A549 (cell line): ENCODE measurements at regions of chr1 and their contacts with region 1.

Region 1: GRCh38 chr1:204806943-204807687 is 63.5 kb upstream of the NFASC start:
- DNase-seq: peak; percentile 82 to 98
- ATAC-seq: peak; percentile 92 to 97
- H3K4me3 ChIP-seq: peak overlapping the region; percentile 44
- H3K27ac ChIP-seq: peak overlapping the region; percentile 65 to 83
- H3K4me1 ChIP-seq: no peaks in the 10 kb centered on the region
- CTCF ChIP-seq: peak; percentile 100
- EP300 ChIP-seq: no peak
- POLR2A ChIP-seq: no peak
- RAD21 ChIP-seq: peak; percentile 89 to 99

Region 2: DNA sequence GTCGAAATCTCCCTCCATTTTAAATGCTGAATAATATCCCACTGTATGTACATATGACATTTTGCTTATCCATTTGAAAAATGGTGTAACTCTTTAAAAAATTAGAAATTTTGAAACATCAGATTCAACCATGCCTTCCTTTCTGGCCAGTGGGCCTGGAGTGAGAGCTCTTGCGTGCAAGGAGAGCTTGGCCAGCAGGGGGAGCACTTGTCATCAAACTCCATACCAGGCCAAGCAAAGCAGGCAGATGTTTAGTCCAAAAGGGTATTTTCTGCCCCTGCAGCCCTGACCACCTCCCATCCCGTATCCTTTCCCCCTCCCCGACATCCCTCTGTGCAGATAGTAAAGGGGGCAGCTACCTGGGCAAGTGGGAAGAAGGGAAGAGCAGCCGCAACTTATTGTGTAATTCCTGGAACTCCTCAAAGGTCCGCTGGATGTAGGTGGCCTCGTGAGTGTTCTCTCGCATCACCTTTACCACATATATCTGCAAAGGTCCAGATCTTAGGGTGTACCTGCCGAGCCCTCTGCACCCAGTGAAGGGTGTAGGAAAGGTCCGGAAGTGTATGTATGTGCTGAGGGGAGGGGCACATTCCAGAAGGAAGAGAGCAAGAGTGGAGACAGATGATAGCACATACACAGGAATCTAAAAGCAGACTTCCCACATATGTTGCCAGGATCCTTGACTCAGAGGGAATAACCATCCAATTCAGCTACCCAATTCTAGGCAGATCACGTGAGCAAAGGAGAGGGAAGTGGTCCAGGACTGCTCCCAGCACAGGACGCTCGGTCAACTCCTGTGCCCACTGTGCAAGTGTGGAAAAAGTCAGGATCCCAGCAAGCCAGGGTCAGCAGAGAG is 375.6 kb before region 1 on chr1:
- CTCF ChIA-PET with region 1: interaction called, 15 read pairs
- POLR2A ChIA-PET with region 1: no interaction called
- DNase-seq: peak; percentile 79
- ATAC-seq: peak; percentile 82 to 95
- H3K4me3 ChIP-seq: no peak overlapping the region
- H3K27ac ChIP-seq: peak overlapping the region; percentile 28 to 51; a peak in 4 of 6 replicates
- H3K4me1 ChIP-seq: peaks cover 22% of the 10 kb centered on the region
- CTCF ChIP-seq: peak; percentile 92
- EP300 ChIP-seq: no peak
- POLR2A ChIP-seq: 0 out of 2 replicates have a peak, but pooled peaks have one; percentile 10
- RAD21 ChIP-seq: peak; percentile 72

Region 3: DNA sequence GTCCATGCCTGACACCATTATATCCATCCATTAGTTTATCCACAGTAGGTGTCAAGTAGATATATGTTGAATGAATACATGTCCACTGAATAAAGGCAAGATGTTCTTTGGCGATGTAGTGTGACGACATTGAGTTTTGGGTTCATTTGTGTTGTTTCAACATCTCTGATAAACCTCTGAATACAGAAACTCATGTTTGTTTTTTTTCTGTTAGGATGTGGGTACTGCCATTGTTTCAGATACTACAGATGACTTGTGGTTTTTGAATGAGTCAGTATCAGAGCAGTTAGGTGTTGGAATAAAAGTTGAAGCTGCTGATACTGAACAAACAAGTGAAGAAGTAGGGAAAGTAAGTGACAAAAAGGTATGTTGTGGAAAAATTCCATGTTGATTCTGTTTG is 262.8 kb before region 1 on chr1:
- CTCF ChIA-PET with region 1: interaction called, 23 read pairs
- POLR2A ChIA-PET with region 1: no interaction called
- DNase-seq: no peak
- ATAC-seq: no peak
- H3K4me3 ChIP-seq: no peak overlapping the region
- H3K27ac ChIP-seq: no peak overlapping the region
- H3K4me1 ChIP-seq: no peaks in the 10 kb centered on the region
- CTCF ChIP-seq: no peak
- EP300 ChIP-seq: no peak
- POLR2A ChIP-seq: no peak
- RAD21 ChIP-seq: no peak

Region 4: GRCh38 chr1:204615881-204616280 is 191.2 kb before region 1 on chr1:
- CTCF ChIA-PET with region 1: interaction called, 27 read pairs
- POLR2A ChIA-PET with region 1: no interaction called
- DNase-seq: no peak
- ATAC-seq: no peak
- H3K4me3 ChIP-seq: no peak overlapping the region
- H3K27ac ChIP-seq: no peak overlapping the region
- H3K4me1 ChIP-seq: peaks cover 6% of the 10 kb centered on the region; the same call in 1 of the 3 replicates
- CTCF ChIP-seq: no peak
- EP300 ChIP-seq: no peak
- POLR2A ChIP-seq: no peak
- RAD21 ChIP-seq: no peak

Region 5: DNA sequence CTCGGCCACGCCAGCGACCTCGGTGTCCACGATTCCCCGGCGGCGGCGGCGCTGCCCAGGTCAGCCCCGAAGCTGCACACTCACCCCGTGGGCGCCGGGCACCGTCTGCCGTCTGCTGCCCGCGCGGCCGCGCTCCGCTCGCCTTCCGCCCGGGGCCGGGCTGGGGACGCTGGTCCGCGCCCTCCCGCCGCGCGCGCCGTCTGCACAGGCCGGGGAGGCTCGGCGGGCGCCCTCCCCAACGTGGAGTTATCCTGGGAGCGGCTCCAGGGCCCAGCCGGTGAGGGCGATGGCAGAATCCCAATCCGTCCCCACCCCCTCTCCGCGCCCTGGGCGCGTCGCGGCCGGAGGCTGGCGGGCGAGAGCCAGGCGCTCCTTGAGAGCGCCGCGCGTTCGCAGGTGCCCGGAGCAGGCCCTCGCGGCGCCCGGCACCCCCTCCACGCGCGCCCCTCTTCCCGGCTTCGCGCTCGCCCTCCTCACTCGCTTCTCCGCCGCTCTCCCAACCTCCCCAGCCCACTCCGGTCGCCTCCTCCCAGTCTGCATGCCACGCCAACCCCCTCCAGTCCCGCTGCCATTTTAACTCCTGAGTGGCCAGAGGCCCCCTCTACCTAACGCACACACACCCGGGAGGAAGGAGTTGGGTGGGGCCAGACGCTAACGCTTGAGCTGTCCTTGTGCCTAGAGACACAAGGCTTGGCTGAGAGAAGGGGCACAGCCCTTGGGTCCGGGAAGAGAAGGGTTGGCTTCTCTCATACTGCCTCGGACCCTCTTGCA is 121.7 kb before region 1 on chr1 and contains the start of gene LRRN2:
- CTCF ChIA-PET with region 1: interaction called, 18 read pairs
- POLR2A ChIA-PET with region 1: no interaction called
- DNase-seq: peak; percentile 28 to 60
- ATAC-seq: peak; percentile 69
- H3K4me3 ChIP-seq: peak within 1 kb of the TSS; percentile 65
- H3K27ac ChIP-seq: peak within 1 kb of the TSS; percentile 82 to 98
- H3K4me1 ChIP-seq: peaks cover 14% of the 10 kb centered on the region
- CTCF ChIP-seq: no peak
- EP300 ChIP-seq: no peak
- POLR2A ChIP-seq: no peak; the same call in none of the 2 replicates
- RAD21 ChIP-seq: no peak
- polyA plus RNA-seq, gene LRRN2: 3.6 and 4.3 TPM in 2 replicates

Region 6: GRCh38 chr1:204769997-204770396 is 37.1 kb before region 1 on chr1:
- CTCF ChIA-PET with region 1: interaction called, 110 read pairs
- POLR2A ChIA-PET with region 1: no interaction called
- DNase-seq: no peak
- ATAC-seq: no peak
- H3K4me3 ChIP-seq: no peak overlapping the region
- H3K27ac ChIP-seq: no peak overlapping the region
- H3K4me1 ChIP-seq: no peaks in the 10 kb centered on the region
- CTCF ChIP-seq: no peak
- EP300 ChIP-seq: no peak
- POLR2A ChIP-seq: no peak
- RAD21 ChIP-seq: no peak

Region 7: DNA sequence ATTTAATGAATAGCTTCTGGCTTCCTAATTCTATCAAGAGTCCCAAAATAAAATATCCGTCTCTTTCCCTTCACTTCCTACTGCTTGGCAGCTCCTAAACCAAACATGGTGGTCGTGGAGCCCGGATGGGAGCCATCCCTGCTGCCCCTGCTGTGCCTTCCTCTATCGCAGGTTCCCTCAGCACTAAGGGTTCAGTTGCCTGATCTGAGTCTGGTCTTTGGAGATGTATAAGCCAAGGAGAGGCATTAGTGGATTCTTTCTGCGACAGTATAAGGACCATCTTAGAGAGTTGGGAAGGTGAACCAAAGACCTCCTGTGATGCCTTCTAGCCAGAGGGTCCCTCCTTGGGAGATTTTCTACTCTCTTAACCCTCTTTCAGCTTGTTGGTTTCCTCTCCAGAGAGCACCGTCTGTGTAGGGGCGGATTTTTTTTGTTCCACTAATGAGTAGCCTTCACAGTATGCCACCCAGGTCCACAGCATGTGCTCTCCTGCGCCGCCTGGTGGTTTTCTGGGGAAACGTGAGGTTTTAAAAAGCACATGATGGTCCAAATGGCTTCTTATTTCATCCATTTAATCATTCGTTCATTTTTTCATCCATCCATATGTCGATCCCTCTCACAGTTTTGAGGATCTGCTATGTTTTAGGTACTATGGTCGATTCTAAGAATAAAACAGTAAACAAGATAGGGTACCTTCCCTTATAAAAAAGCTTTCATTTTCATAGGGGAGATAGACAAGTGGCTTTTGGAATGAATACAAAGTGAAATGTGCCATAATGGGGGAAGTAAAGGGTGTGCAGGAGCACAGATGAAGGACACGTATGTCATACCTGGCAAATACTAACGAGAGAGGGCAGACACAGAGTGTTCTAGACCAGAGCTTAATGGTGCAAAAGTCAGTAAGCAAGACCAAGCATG is 134.6 kb after region 1 on chr1:
- CTCF ChIA-PET with region 1: interaction called, 48 read pairs
- POLR2A ChIA-PET with region 1: no interaction called
- DNase-seq: peak; percentile 52 to 57
- ATAC-seq: peak in 1 of 2 experiments; percentile 86; a peak in 3 of 6 replicates
- H3K4me3 ChIP-seq: no peak overlapping the region
- H3K27ac ChIP-seq: no peak overlapping the region
- H3K4me1 ChIP-seq: no peaks in the 10 kb centered on the region
- CTCF ChIP-seq: peak; percentile 73
- EP300 ChIP-seq: no peak
- POLR2A ChIP-seq: no peak
- RAD21 ChIP-seq: peak; percentile 34 to 69; a peak in 2 of 5 replicates